K562 (cell line): ENCODE measurements at regions of chr14 and their contacts with region 1.

Region 1: DNA sequence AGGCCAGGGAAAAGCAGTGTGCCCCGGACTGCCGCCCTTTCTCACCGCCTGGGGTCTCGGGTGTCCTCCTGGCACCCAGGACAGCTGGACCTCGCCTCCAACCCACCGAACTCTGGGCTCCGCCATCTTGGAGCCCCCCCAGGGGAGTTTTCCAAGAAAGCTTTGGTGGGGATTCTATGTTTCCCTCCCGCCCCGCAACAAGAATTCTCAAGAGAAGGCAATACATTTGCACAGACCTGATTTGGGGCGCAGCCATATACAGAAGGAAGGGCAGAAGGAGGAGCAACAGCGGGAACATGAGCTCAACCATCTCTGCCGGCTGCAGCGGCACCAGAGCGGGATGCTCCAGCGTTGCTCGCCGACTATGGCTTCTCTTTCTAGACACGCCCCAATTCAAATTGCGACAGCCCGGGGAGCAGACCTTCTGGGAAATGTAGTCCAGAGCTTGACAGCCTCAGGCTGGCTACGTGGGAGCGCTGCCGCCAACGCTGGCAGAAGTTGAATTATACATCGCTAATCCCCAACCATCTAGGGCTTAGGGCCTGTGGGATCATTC is at the start of gene RDH11:
- DNase-seq: peak; percentile 63 to 86 (median 71)
- ATAC-seq: peak; percentile 96
- H3K4me3 ChIP-seq: peak within 1 kb of the TSS; percentile 63
- H3K27ac ChIP-seq: peak within 1 kb of the TSS; percentile 91
- H3K4me1 ChIP-seq: peaks cover 6 to 8% of the 10 kb centered on the region in 2 experiments; a peak in 3 of 5 replicates
- H3K27me3 ChIP-seq: no peaks in the 10 kb centered on the region
- CTCF ChIP-seq: no peak
- EP300 ChIP-seq: no peak
- POLR2A ChIP-seq: peak; percentile 82
- RAD21 ChIP-seq: no peak
- polyA plus RNA-seq, gene RDH11: 101 to 116 TPM

Region 2: GRCh38 chr14:67674481-67675169 is 20.8 kb before region 1 on chr14 and contains the start of gene VTI1B:
- CTCF ChIA-PET with region 1: no interaction called
- POLR2A ChIA-PET with region 1: interaction called, 6 read pairs
- in situ Hi-C with region 1: no loop called
- intact Hi-C with region 1: loop called (anchors 2 kb)
- DNase-seq: peak; percentile 73 to 82 (median 77)
- ATAC-seq: peak; percentile 95
- H3K4me3 ChIP-seq: peak within 1 kb of the TSS; percentile 90
- H3K27ac ChIP-seq: peak within 1 kb of the TSS; percentile 94
- H3K4me1 ChIP-seq: peaks cover 16 to 19% of the 10 kb centered on the region in 2 experiments
- H3K27me3 ChIP-seq: no peaks in the 10 kb centered on the region
- CTCF ChIP-seq: peak; percentile 11 to 33 (median 32); a peak in 2 of 6 replicates
- EP300 ChIP-seq: no peak
- POLR2A ChIP-seq: peak; percentile 77
- RAD21 ChIP-seq: peak; percentile 23 to 28; a peak in 2 of 4 replicates
- polyA plus RNA-seq, gene VTI1B: 7.8 to 8.5 TPM